Endothelial cell of umbilical vein (primary cell): ENCODE measurements at regions of chr1 and their contacts with region 1.

Region 1: DNA sequence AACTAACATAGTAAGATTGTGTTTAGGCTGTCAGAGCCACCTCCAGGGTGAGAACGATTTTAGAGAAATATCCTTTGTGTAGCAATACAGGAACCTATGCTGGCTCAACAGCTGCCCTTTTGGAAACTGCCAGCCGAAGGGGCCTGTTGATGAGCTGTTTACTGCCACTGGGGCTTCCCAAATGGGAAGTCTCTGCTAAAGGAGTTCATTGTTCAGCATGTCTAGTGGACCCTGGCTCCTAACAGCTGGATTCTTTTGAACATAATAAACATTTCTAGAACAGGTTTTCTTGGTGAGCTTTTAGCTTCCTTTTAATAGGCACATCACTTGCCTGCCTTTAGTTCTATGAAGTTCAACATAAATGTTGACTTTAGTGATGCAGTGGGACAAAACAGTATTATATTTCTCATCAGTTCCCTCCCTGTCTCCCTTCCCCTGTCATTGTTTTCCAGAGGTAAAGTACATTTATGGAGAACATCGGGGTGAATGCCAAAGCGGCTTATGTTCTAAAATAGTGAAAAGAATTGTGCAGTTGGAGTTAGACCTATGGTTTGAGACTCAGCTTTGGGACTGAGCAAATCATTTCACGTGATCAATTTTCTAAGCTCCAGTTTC is 57.4 kb downstream of the UCK2 start:
- DNase-seq: peak; percentile 70
- H3K4me3 ChIP-seq: no peak overlapping the region
- H3K27ac ChIP-seq: peak overlapping the region; percentile 83
- H3K4me1 ChIP-seq: peaks cover 26% of the 10 kb centered on the region
- H3K27me3 ChIP-seq: no peaks in the 10 kb centered on the region
- CTCF ChIP-seq: no peak
- POLR2A ChIP-seq: no peak

Region 2: GRCh38 chr1:165871311-165872067 is 13.3 kb before region 1 on chr1:
- CTCF ChIA-PET with region 1: interaction called, 27 read pairs
- POLR2A ChIA-PET with region 1: no interaction called
- dilution Hi-C with region 1: no loop called
- intact Hi-C with region 1: no loop called
- DNase-seq: peak; percentile 54
- H3K4me3 ChIP-seq: no peak overlapping the region
- H3K27ac ChIP-seq: peak overlapping the region; percentile 21
- H3K4me1 ChIP-seq: peaks cover 10% of the 10 kb centered on the region
- H3K27me3 ChIP-seq: no peaks in the 10 kb centered on the region
- CTCF ChIP-seq: peak; percentile 44 to 45
- POLR2A ChIP-seq: no peak

Region 3: DNA sequence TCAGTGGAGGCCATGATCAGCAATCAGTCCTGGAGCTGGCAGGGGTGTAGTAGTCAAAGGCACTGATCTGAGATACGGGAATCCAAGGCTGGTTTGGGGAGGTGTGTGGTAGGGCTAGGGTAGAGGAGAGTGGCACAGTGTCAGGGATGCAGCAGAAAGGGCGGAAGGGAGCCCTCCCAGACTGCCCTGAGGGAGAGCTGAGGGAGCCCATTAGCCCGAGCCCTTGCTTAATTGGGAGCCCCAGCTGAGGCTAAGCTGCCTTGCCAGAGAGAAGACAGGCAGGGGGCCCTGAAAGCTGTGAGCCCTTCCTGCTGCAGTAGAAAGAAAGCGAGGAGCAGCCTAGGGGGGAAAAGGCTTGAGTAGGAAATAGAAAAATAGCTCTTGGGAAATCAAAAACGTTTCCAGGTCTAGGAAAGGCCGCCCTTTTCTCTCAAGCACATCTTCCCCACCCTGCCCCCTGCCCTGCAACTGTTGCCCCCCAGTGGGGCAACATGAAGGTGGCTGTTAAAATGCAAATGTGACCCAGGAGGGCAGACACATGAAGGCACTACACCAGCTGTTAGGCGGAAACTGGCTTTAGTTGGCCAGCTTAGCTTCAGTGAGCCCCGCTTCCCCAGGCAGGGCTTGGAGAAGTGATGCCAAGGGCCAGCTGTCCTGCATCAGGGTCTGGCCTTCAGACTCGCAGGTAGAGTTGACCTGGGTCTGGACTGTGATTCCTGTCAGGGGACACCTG is 48.8 kb after region 1 on chr1:
- CTCF ChIA-PET with region 1: no interaction called
- POLR2A ChIA-PET with region 1: no interaction called
- dilution Hi-C with region 1: no loop called
- intact Hi-C with region 1: no loop called
- DNase-seq: no peak
- H3K4me3 ChIP-seq: no peak overlapping the region
- H3K27ac ChIP-seq: no peak overlapping the region
- H3K4me1 ChIP-seq: no peaks in the 10 kb centered on the region
- H3K27me3 ChIP-seq: no peaks in the 10 kb centered on the region
- CTCF ChIP-seq: no peak
- POLR2A ChIP-seq: no peak